Activated T-helper 2 cell treated with anti-CD3 and anti-CD28 coated beads, Interferon-gamma antibody, Interleukin-2, Interleukin-4, amounts not matched to agents 10 μg/mL and 5 μg/mL and 100 μg/mL, durations not matched to agents 14 hours and 24 hours and 36 hours (primary cell): ENCODE measurements at regions of chr11 and their contacts with region 1.

Region 1: GRCh38 chr11:57426929-57427726 is at the start of gene SLC43A3:
- DNase-seq: peak; percentile 66
- H3K4me3 Mint-ChIP-seq: peak within 1 kb of the TSS; percentile 91
- H3K27ac Mint-ChIP-seq: peak within 1 kb of the TSS; percentile 64
- H3K4me1 Mint-ChIP-seq: peaks cover 44% of the 10 kb centered on the region
- H3K27me3 Mint-ChIP-seq: peaks cover 3% of the 10 kb centered on the region
- total RNA-seq, gene SLC43A3: 174 and 189 TPM in 2 replicates

Region 2: GRCh38 chr11:57406337-57406904 is 20.7 kb before region 1 on chr11:
- intact Hi-C with region 1: loop called (anchors 1 kb)
- DNase-seq: no peak
- H3K4me3 Mint-ChIP-seq: peak overlapping the region; percentile 2
- H3K27ac Mint-ChIP-seq: peak overlapping the region; percentile 98
- H3K4me1 Mint-ChIP-seq: peaks cover 30% of the 10 kb centered on the region
- H3K27me3 Mint-ChIP-seq: no peaks in the 10 kb centered on the region

Region 3: DNA sequence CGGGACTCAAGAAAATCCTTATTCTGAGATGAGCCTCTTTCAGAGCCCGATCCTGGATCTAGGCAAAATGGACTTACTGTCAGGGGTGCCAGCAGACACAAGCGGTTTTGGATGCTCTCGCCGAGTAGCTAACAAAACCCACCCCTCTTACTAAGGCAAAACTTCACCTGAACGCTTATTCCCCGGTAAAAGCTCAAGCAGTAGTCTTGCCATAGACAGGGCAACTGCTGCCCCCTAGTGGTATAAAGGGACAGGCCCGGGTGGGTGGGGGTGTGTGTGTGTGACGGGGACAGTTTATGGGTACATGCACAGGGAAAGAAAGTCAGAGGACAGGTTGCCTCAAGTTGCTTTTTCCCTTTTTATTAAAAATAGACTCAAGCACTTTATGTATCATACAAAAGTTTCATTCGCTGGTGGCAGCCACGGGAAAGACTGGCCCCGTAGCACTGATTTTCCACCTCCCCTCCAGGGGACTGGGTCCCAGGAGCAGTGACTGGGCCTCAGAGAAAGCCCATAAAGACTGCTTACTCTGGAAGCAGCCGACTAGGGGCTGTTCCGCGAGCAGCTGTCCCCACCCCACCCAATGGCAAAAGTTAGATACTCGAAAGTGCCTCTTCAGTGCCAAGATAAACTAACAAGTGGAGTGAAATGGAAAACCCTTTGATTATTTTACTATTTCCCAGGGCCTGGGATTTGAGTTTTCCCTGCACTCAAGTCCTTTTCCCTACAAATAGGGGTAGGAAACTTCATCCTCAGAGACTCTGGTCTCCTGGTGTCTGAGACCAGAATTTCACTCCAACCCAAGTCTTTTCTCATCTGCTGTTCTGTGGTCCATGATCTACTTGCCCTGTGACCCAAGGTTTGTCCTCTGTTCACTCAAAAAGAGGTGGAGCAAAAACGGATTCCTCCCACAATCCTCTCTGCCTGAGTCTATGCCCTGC is 217.9 kb after region 1 on chr11:
- intact Hi-C with region 1: loop called (anchors 10 kb)
- DNase-seq: peak; percentile 75
- H3K4me3 Mint-ChIP-seq: no peak overlapping the region
- H3K27ac Mint-ChIP-seq: no peak overlapping the region
- H3K4me1 Mint-ChIP-seq: peaks cover 48% of the 10 kb centered on the region
- H3K27me3 Mint-ChIP-seq: peaks cover 46% of the 10 kb centered on the region